Activated B cell treated with CpG ODN at 0.5 μM for 24 hours (primary cell): ENCODE measurements at regions of chr5 and their contacts with region 1.

Region 1: DNA sequence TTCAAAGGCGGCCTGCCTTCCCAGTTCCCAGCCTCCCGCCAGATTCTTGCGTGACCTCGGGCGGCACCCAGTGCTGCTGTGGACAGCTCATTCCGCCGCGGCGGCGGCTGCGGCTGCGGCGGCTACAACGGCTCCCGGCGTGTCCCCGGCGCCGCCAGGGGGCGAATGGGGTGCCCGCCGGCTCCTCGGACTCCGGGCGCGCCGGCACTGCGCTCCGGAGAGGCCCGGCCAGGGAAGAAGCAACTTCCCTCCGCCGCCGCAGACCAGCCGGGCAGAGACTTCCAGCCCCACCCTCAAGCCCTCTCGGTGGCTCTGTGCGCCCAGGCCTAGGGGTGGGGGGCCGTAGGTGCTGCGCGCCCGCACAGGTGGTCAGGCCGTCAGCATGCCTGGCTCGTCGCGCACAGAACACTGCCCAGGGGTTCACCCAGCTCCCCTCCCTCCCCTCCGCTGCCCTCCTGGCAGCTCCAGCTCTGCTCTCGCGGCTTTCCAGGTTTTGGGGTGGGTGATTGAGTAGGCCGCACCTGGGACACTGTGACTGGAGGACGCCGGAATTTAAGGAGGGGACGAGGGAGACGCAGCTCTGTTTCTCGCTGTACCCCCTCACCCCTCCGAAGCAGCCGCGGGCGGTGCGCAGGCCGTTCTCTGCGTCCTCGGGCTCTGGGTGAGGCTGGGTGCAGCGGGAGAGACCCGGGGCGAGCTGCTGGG is 20.2 kb downstream of the IGIP start:
- DNase-seq: peak; percentile 62
- ATAC-seq: peak; percentile 77
- H3K4me3 Mint-ChIP-seq: peak overlapping the region; percentile 52
- H3K27ac Mint-ChIP-seq: no peak overlapping the region
- H3K4me1 Mint-ChIP-seq: peaks cover 26% of the 10 kb centered on the region
- H3K27me3 Mint-ChIP-seq: peaks cover 21% of the 10 kb centered on the region
- CTCF ChIP-seq: peak; percentile 28

Region 2: GRCh38 chr5:140073296-140073695 is 72.7 kb before region 1 on chr5:
- CTCF ChIA-PET with region 1: interaction called, 116 read pairs
- POLR2A ChIA-PET with region 1: interaction called, 5 read pairs
- intact Hi-C with region 1: loop called (anchors 1 kb)
- DNase-seq: no peak
- ATAC-seq: no peak
- H3K4me3 Mint-ChIP-seq: no peak overlapping the region
- H3K27ac Mint-ChIP-seq: no peak overlapping the region
- H3K4me1 Mint-ChIP-seq: no peaks in the 10 kb centered on the region
- H3K27me3 Mint-ChIP-seq: peaks cover 17% of the 10 kb centered on the region
- CTCF ChIP-seq: peak; percentile 87

Region 3: DNA sequence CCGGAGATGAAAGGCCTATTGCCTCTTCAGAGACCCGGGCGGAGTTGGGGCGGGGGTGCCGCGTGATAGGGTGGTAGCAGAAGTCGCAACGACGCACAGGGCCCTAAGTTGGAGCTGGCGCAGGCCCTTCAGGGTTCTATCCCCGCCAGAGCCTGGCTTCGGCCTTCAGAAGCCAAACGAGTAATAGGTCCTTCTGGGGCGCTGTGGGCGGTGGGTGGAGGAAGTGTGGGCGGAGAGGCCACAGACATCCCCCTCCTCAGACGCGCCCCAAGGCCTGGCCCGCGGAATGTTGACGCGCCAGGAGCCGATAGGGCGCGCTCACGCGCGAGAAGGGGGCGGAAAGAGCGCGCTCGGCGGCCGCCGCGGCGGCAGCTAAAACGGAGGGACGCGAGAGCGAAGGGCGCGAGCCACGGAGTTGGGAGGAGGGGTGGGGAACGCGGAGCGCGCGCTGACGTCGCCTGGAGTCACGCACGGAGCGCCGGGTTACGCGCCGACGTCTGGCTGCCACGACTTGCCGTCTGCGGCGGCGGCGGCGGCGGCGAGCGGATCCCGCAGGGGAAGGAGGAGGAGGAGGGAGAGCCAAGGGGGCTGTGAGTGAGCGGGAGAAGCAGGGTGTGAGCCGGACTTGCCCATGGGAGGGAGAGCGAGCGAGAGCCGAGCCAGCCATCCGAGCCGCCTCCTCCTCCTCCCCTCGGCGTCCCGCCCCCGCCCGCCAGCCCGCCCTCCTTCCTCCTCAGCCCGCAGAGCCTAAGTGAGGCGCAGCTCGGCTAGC is 38.5 kb before region 1 on chr5:
- CTCF ChIA-PET with region 1: interaction called, 59 read pairs
- POLR2A ChIA-PET with region 1: interaction called, 10 read pairs
- intact Hi-C with region 1: loop called (anchors 1 kb)
- DNase-seq: peak; percentile 92
- ATAC-seq: peak; percentile 89
- H3K4me3 Mint-ChIP-seq: peak overlapping the region; percentile 98
- H3K27ac Mint-ChIP-seq: peak overlapping the region; percentile 97
- H3K4me1 Mint-ChIP-seq: peaks cover 44% of the 10 kb centered on the region
- H3K27me3 Mint-ChIP-seq: peaks cover 15% of the 10 kb centered on the region
- CTCF ChIP-seq: no peak

Region 4: GRCh38 chr5:140131967-140132409 is 14.0 kb before region 1 on chr5:
- CTCF ChIA-PET with region 1: interaction called, 13 read pairs
- POLR2A ChIA-PET with region 1: no interaction called
- intact Hi-C with region 1: no loop called
- DNase-seq: no peak
- ATAC-seq: peak; percentile 49
- H3K4me3 Mint-ChIP-seq: no peak overlapping the region
- H3K27ac Mint-ChIP-seq: no peak overlapping the region
- H3K4me1 Mint-ChIP-seq: peaks cover 29% of the 10 kb centered on the region
- H3K27me3 Mint-ChIP-seq: no peaks in the 10 kb centered on the region
- CTCF ChIP-seq: no peak

Region 5: GRCh38 chr5:140312067-140312790 is 166.3 kb after region 1 on chr5:
- CTCF ChIA-PET with region 1: no interaction called
- POLR2A ChIA-PET with region 1: no interaction called
- intact Hi-C with region 1: no loop called
- DNase-seq: no peak
- ATAC-seq: no peak
- H3K4me3 Mint-ChIP-seq: no peak overlapping the region
- H3K27ac Mint-ChIP-seq: no peak overlapping the region
- H3K4me1 Mint-ChIP-seq: no peaks in the 10 kb centered on the region
- H3K27me3 Mint-ChIP-seq: peaks cover 5% of the 10 kb centered on the region
- CTCF ChIP-seq: no peak

Region 6: GRCh38 chr5:140420226-140420570 is 274.2 kb after region 1 on chr5:
- CTCF ChIA-PET with region 1: no interaction called
- POLR2A ChIA-PET with region 1: no interaction called
- intact Hi-C with region 1: no loop called
- DNase-seq: no peak
- ATAC-seq: no peak
- H3K4me3 Mint-ChIP-seq: no peak overlapping the region
- H3K27ac Mint-ChIP-seq: no peak overlapping the region
- H3K4me1 Mint-ChIP-seq: peaks cover 58% of the 10 kb centered on the region
- H3K27me3 Mint-ChIP-seq: no peaks in the 10 kb centered on the region
- CTCF ChIP-seq: no peak

Region 7: GRCh38 chr5:140988031-140988997 is 842.3 kb after region 1 on chr5:
- CTCF ChIA-PET with region 1: no interaction called
- POLR2A ChIA-PET with region 1: no interaction called
- intact Hi-C with region 1: no loop called
- DNase-seq: no peak
- ATAC-seq: no peak
- H3K4me3 Mint-ChIP-seq: no peak overlapping the region
- H3K27ac Mint-ChIP-seq: no peak overlapping the region
- H3K4me1 Mint-ChIP-seq: no peaks in the 10 kb centered on the region
- H3K27me3 Mint-ChIP-seq: peaks cover 3% of the 10 kb centered on the region
- CTCF ChIP-seq: no peak